ENCODE measurements at regions of chr3 and their contacts with region 1.

Region 1: DNA sequence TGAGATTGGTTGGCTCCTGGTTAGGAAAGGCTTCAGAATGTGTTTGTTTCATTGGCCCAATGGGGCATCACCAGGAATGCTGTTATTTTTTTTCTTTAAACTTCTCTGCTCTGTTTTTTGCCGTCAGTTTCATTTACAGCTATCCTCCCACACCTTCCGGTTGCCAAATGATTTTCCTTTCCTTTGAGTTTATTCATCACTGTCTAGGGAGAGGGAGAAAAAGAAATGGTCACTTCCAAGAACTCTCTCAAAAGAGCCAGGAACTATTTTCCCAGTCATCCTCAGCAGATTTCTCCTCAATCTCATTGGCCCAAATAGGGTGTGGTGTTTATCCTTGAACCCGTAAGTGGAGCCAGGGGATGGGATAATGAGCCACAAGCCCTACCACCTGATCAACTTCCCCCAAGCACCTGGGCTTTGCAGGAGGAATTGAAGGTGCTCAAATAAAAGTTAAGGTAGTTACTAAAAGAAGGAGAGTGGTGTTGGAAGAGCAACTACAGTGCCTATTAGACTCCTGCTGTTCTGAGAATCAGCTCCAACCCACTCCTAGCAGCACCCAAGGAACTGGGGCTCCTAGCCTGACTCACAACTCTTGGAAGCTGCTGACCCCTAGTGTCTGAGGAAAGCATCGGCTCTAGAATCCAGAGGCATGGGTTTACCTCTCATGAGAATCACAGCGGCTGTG is 183.8 kb upstream of the IL12A start:
- DNase-seq: peak; percentile 57
- H3K4me3 Mint-ChIP-seq: no peak overlapping the region
- H3K27ac Mint-ChIP-seq: no peak overlapping the region
- H3K4me1 Mint-ChIP-seq: no peaks in the 10 kb centered on the region
- H3K27me3 Mint-ChIP-seq: no peaks in the 10 kb centered on the region

Region 2: GRCh38 chr3:158918008-158918407 is 886.9 kb before region 1 on chr3:
- CTCF ChIA-PET with region 1: no interaction called
- intact Hi-C with region 1: loop called (anchors 10 kb)
- DNase-seq: peak; percentile 51
- H3K4me3 Mint-ChIP-seq: no peak overlapping the region
- H3K27ac Mint-ChIP-seq: no peak overlapping the region
- H3K4me1 Mint-ChIP-seq: no peaks in the 10 kb centered on the region
- H3K27me3 Mint-ChIP-seq: peaks cover 5% of the 10 kb centered on the region

Region 3: DNA sequence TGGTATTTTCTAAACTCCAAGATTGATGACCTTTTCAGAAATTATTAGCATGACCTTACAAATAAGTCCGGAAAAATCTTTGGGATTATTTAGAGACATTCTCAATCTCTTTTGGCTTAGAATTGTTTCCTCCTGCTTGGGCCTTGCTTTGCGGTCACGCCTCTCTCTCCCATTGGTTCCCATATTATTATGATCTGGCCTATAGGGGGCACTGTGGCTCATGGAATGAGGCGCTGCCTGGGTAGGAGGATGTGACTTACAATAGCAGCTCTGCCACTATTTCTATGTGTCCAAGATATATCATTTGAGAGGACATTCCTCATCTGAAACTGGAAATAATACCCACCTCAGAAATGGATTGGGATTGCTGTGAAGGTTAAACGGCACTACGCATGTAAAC is 538.1 kb before region 1 on chr3:
- CTCF ChIA-PET with region 1: interaction called, 16 read pairs
- intact Hi-C with region 1: loop called (anchors 1 kb)
- DNase-seq: peak; percentile 45
- H3K4me3 Mint-ChIP-seq: no peak overlapping the region
- H3K27ac Mint-ChIP-seq: no peak overlapping the region
- H3K4me1 Mint-ChIP-seq: no peaks in the 10 kb centered on the region
- H3K27me3 Mint-ChIP-seq: peaks cover 25% of the 10 kb centered on the region

Region 4: DNA sequence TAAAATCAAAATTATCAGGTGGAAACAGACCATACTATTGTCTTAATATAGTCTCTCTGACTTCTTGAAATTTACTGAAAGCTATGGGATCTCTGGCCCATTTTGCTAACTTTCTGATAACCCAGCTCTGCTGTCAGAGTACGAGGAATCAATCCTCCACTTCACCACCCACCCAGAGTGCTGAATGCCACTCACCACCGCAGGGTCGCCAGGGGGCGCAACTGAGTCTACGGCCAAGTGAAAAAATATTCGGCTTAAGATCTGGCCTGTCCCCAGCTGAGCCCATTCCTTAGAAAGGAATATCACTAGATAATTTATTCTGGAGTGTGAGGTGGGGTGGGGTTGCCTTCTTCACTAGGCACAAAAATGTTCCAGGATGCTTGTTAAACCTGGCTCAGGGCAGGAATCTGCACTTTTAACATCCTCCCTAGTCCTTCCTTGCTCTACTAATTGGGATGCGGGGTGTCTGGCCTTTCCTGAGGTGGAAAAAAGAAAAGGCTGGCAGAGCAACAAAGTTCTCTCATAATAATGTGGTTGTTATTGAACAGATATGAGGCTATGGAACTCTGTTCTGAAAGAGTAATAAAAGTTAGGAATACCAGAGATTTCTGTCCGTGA is 482.4 kb before region 1 on chr3:
- CTCF ChIA-PET with region 1: interaction called, 3 read pairs
- intact Hi-C with region 1: loop called (anchors 1 kb)
- DNase-seq: peak; percentile 9
- H3K4me3 Mint-ChIP-seq: no peak overlapping the region
- H3K27ac Mint-ChIP-seq: no peak overlapping the region
- H3K4me1 Mint-ChIP-seq: no peaks in the 10 kb centered on the region
- H3K27me3 Mint-ChIP-seq: no peaks in the 10 kb centered on the region

Region 5: GRCh38 chr3:159586571-159587202 is 218.2 kb before region 1 on chr3:
- CTCF ChIA-PET with region 1: no interaction called
- intact Hi-C with region 1: no loop called
- DNase-seq: no peak
- H3K4me3 Mint-ChIP-seq: no peak overlapping the region
- H3K27ac Mint-ChIP-seq: no peak overlapping the region
- H3K4me1 Mint-ChIP-seq: no peaks in the 10 kb centered on the region
- H3K27me3 Mint-ChIP-seq: no peaks in the 10 kb centered on the region

Region 6: DNA sequence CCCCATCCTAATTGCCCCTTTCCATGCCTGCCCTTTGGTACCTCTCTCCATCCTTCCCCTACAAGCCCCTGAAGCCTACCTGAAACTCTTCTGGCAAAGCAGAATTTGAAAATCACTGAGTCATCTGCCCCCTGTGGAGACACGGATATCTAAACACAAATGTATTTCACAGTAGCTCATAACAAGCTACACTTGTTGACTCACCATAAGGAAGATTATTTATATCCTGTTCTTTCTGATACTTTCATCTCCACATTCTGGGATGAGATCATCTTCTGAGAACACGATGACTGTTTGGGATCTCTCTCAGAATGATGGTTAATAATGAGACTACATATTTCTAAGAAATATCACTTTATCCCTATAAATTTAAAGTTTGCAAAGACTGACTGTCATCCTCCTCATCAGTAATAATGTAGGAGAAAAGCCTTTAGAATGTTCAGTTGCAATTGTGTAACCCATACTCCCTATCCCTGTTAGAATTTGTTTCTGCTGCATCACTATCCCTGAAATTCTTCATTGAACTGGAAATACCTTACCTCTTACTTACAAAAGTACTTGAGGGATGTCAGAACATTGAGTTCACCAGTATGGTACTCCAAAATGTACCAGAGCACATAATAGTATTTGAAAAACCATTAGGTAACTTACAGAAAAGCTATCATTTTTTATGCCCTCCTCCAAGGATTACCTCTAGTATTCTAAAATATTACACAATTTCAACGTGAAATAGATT is 67.7 kb after region 1 on chr3:
- CTCF ChIA-PET with region 1: no interaction called
- intact Hi-C with region 1: no loop called
- DNase-seq: no peak
- H3K4me3 Mint-ChIP-seq: no peak overlapping the region
- H3K27ac Mint-ChIP-seq: no peak overlapping the region
- H3K4me1 Mint-ChIP-seq: no peaks in the 10 kb centered on the region
- H3K27me3 Mint-ChIP-seq: peaks cover 9% of the 10 kb centered on the region

Measured in activated naive CD4-positive, alpha-beta T cell treated with anti-CD3 and anti-CD28 coated beads for 36 hours (primary cell).